H1 (cell line): ENCODE measurements at regions of chr11 and their contacts with region 1.

Region 1: DNA sequence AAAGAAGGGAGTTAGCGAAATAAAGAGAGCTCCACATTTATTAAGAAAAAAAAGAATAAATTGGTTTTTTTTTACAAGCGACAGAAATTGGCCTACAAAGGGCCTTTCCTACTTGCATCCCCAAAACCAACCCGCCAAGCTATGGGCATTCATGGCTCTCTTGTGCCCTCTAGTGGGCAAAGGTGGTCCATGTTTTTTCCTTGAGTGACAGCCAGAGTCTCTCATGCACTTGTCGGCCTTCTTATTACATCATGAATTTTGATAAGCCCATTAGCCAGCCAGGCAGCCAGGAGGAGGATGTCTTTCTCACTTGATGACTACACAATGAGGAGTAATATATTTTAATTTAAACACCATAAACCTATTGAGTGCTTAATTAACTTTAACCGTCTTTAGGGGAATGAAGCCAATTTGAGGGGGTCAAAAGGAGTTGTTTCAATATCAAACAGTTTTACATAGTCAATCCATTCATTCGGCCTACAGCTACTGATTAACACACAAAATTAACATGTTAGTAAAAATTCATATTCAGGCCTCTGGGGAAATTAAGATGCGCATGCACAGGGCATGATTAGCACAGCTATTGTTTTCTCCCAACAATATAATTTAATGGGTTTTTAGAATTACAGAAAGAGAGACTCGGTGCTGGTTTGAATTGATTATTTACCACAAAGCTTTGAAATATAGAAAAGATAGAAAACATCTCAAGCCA is 85.5 kb downstream of the RCN1 start:
- DNase-seq: peak; percentile 59 to 91
- H3K4me3 ChIP-seq: no peak overlapping the region
- H3K27ac ChIP-seq: no peak overlapping the region
- H3K4me1 ChIP-seq: no peaks in the 10 kb centered on the region
- H3K27me3 ChIP-seq: no peaks in the 10 kb centered on the region
- CTCF ChIP-seq: peak; percentile 65 to 87 (median 84)
- EP300 ChIP-seq: no peak
- POLR2A ChIP-seq: no peak
- RAD21 ChIP-seq: peak; percentile 91 to 94

Region 2: DNA sequence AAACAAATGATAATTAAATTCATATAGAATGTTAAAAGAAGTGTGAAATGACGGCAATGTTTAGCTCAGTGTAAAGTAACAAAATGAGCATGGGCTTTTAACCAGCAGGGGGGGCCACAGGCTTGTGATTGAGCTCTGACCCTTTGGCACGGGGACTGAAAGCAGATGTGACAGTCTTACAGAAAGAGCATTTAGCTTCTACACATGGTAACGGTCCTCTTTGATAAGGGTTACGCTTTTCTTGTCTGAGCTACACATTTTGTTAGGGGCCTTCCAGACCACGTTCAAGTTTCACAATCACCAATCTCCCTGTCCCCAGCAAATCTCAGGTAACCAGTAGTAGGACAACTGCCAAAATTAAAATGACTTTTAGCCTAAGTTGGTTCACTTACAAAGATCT is 1069.3 kb before region 1 on chr11:
- CTCF ChIA-PET with region 1: interaction called, 10 read pairs
- POLR2A ChIA-PET with region 1: no interaction called
- DNase-seq: peak; percentile 36 to 88
- H3K4me3 ChIP-seq: no peak overlapping the region
- H3K27ac ChIP-seq: no peak overlapping the region
- H3K4me1 ChIP-seq: peaks cover 0 to 5% (median 1%) of the 10 kb centered on the region in 4 experiments; a peak in 2 of 7 replicates
- H3K27me3 ChIP-seq: no peaks in the 10 kb centered on the region
- CTCF ChIP-seq: peak; percentile 50 to 85 (median 84)
- EP300 ChIP-seq: no peak
- POLR2A ChIP-seq: no peak
- RAD21 ChIP-seq: peak; percentile 98 to 99

Region 3: GRCh38 chr11:32006799-32007388 is 169.5 kb before region 1 on chr11:
- CTCF ChIA-PET with region 1: interaction called, 14 read pairs
- POLR2A ChIA-PET with region 1: no interaction called
- DNase-seq: no peak
- H3K4me3 ChIP-seq: no peak overlapping the region
- H3K27ac ChIP-seq: no peak overlapping the region
- H3K4me1 ChIP-seq: peaks cover 0 to 4% (median 0%) of the 10 kb centered on the region in 4 experiments; a peak in 2 of 7 replicates
- H3K27me3 ChIP-seq: no peaks in the 10 kb centered on the region
- CTCF ChIP-seq: peak; percentile 57 to 83 (median 64)
- EP300 ChIP-seq: no peak
- POLR2A ChIP-seq: no peak
- RAD21 ChIP-seq: peak; percentile 76 to 84

Region 4: GRCh38 chr11:32044158-32044863 is 132.1 kb before region 1 on chr11:
- CTCF ChIA-PET with region 1: interaction called, 73 read pairs
- POLR2A ChIA-PET with region 1: no interaction called
- DNase-seq: no peak
- H3K4me3 ChIP-seq: no peak overlapping the region
- H3K27ac ChIP-seq: no peak overlapping the region
- H3K4me1 ChIP-seq: no peaks in the 10 kb centered on the region; a peak in 1 of 7 replicates
- H3K27me3 ChIP-seq: no peaks in the 10 kb centered on the region
- CTCF ChIP-seq: no peak
- EP300 ChIP-seq: no peak
- POLR2A ChIP-seq: no peak
- RAD21 ChIP-seq: no peak

Region 5: DNA sequence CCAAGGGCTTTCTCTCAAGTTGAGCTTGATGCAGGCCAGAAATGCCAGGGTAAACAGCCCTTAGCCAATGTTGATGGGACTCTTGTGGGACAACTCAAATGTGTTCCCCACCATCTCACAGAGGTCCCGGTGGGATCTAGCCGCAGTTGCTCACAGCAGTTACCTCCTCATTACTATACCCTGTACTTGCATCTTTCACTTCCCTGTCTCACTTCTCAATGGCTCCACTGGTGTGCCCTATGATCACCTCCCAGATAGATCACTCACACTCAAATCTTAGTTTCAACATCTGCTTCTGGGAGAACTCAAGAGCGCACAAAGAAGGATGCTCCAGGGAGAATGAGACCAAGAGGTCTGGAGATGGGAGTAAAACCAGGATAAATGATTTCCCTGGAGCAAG is 38.5 kb before region 1 on chr11:
- CTCF ChIA-PET with region 1: interaction called, 13 read pairs
- POLR2A ChIA-PET with region 1: interaction called, 4 read pairs
- DNase-seq: no peak
- H3K4me3 ChIP-seq: no peak overlapping the region
- H3K27ac ChIP-seq: no peak overlapping the region
- H3K4me1 ChIP-seq: no peaks in the 10 kb centered on the region
- H3K27me3 ChIP-seq: no peaks in the 10 kb centered on the region
- CTCF ChIP-seq: no peak
- EP300 ChIP-seq: no peak
- POLR2A ChIP-seq: no peak
- RAD21 ChIP-seq: no peak

Region 6: GRCh38 chr11:32162351-32162750 is 14.0 kb before region 1 on chr11:
- CTCF ChIA-PET with region 1: interaction called, 74 read pairs
- POLR2A ChIA-PET with region 1: no interaction called
- DNase-seq: no peak
- H3K4me3 ChIP-seq: no peak overlapping the region
- H3K27ac ChIP-seq: no peak overlapping the region
- H3K4me1 ChIP-seq: no peaks in the 10 kb centered on the region
- H3K27me3 ChIP-seq: no peaks in the 10 kb centered on the region
- CTCF ChIP-seq: no peak
- EP300 ChIP-seq: no peak
- POLR2A ChIP-seq: no peak
- RAD21 ChIP-seq: no peak

Region 7: GRCh38 chr11:32266601-32267000 is 90.2 kb after region 1 on chr11:
- CTCF ChIA-PET with region 1: no interaction called
- POLR2A ChIA-PET with region 1: no interaction called
- DNase-seq: no peak
- H3K4me3 ChIP-seq: no peak overlapping the region
- H3K27ac ChIP-seq: no peak overlapping the region
- H3K4me1 ChIP-seq: peaks cover 0 to 5% (median 1%) of the 10 kb centered on the region in 4 experiments; a peak in 2 of 7 replicates
- H3K27me3 ChIP-seq: no peaks in the 10 kb centered on the region
- CTCF ChIP-seq: no peak
- EP300 ChIP-seq: no peak
- POLR2A ChIP-seq: no peak
- RAD21 ChIP-seq: no peak